Heart right ventricle (tissue), 16 donors: ENCODE measurements at regions of chr13 and their contacts with region 1.

Region 1: DNA sequence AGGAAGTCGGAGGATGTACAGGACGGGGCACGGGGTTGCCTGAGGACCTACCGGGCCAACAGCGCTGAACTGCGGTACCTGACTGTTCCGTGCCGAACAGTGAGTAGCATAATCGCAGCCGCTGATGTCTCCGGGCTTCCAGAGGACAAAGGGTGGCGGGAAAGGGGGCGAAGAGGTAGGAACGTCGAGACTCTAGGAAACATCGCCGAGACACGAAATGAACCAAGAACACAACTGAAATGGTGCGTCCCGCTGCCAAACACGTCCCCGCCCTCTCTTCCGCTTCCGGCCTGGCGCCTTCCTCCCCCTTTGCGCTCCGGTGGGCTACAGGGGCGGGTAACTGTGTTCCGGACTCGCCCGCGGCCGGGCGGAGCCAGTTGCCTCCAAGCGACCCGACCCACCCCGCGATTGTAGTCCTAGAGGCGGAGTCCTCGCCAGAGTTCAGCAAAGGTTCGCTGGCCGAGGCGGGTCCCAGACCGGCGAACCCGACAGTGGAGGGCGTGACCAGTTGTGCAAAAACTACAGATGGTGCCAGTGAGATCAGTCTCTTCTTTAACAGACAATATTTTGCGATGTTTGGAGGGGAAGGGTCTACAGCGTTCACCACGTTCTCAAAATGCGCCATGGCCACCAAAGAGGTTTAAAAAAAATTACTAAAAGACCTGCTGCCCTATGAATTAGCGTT is at the start of gene MRPS31:
- DNase-seq: peak; percentile 95 to 97
- ATAC-seq: peak; percentile 99 to 100 (median 100)
- H3K4me3 ChIP-seq: peak within 1 kb of the TSS; percentile 53 to 94 (median 74)
- H3K27ac ChIP-seq: peak within 1 kb of the TSS; percentile 73 to 94 (median 88)
- H3K4me1 ChIP-seq: peaks cover 0 to 26% (median 11%) of the 10 kb centered on the region in 9 donors
- H3K27me3 ChIP-seq: no peaks in the 10 kb centered on the region
- CTCF ChIP-seq: peak in 3 of 9 donors; percentile 6 to 23 (median 14)
- total RNA-seq, gene MRPS31: 22.2 to 32.9 (median 30.4) TPM

Region 2: GRCh38 chr13:39684531-39685137 is 1086.4 kb before region 1 on chr13:
- intact Hi-C with region 1: loop called in 5 of 10 experiments (anchors 5 to 10 kb)
- DNase-seq: no peak
- ATAC-seq: no peak
- H3K4me3 ChIP-seq: no peak overlapping the region
- H3K27ac ChIP-seq: no peak overlapping the region
- H3K4me1 ChIP-seq: peaks cover 0 to 9% (median 0%) of the 10 kb centered on the region in 9 donors
- H3K27me3 ChIP-seq: no peaks in the 10 kb centered on the region
- CTCF ChIP-seq: peak in 8 of 9 donors; percentile 28 to 65 (median 50)

Region 3: DNA sequence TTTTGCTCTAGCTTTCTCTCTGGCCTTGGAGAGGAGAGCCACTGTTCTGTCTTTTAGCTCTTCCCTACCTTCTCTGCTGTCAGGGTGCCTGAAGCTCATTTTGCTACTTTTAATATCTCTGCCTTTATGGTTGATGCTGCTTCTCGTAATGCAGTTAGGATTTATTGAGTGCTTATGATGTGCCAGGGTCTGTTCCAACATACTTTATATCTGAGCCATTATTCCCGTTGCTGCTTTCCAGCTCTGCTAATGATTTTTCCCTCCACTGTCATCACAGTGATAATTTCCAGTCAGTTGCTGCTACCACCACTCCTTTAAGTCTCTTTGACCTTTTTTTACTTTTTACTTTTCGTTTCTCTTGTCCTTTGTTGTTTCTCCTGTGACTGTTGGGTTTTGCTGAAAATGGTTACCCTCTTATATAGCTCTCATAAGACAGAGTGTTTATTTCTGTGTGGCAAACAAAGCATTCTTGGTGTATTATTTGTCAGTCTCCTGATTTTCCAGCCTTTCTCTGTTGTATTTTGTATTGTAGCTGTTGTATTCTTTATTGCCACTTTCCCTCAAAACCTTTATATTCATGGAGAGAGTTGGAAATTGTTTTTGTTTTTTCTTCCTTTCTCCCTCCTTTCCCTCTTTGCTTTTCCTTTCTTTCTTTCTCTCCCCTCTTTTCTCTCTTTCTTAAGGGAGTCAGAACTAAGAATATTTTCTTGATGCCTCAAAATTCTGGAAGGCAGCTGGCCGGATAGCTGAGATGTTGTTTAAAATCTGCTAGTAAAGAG is 1078.2 kb before region 1 on chr13:
- intact Hi-C with region 1: loop called in 3 of 10 experiments (anchors 10 kb)
- DNase-seq: no peak
- ATAC-seq: no peak
- H3K4me3 ChIP-seq: no peak overlapping the region
- H3K27ac ChIP-seq: no peak overlapping the region
- H3K4me1 ChIP-seq: peaks cover 0 to 9% (median 0%) of the 10 kb centered on the region in 9 donors
- H3K27me3 ChIP-seq: no peaks in the 10 kb centered on the region
- CTCF ChIP-seq: no peak

Region 4: GRCh38 chr13:40789275-40790133 is 18.4 kb after region 1 on chr13 and contains the start of gene SLC25A15:
- intact Hi-C with region 1: loop called in 1 of 10 experiments (anchors 1 kb)
- DNase-seq: peak; percentile 77 to 84
- ATAC-seq: peak; percentile 89 to 96 (median 94)
- H3K4me3 ChIP-seq: peak within 1 kb of the TSS; percentile 42 to 85 (median 70)
- H3K27ac ChIP-seq: peak within 1 kb of the TSS; percentile 1 to 92 (median 84)
- H3K4me1 ChIP-seq: peaks cover 0 to 19% (median 10%) of the 10 kb centered on the region in 9 donors
- H3K27me3 ChIP-seq: no peaks in the 10 kb centered on the region
- CTCF ChIP-seq: peak in 5 of 9 donors; percentile 38 to 55 (median 53)
- total RNA-seq, gene SLC25A15: 3.3 to 6.0 (median 4.9) TPM

Region 5: GRCh38 chr13:40801255-40802217 is 30.5 kb after region 1 on chr13:
- intact Hi-C with region 1: no loop called
- DNase-seq: no peak
- ATAC-seq: no peak
- H3K4me3 ChIP-seq: no peak overlapping the region
- H3K27ac ChIP-seq: no peak overlapping the region
- H3K4me1 ChIP-seq: no peaks in the 10 kb centered on the region
- H3K27me3 ChIP-seq: no peaks in the 10 kb centered on the region
- CTCF ChIP-seq: no peak